ENCODE measurements at regions of chr12 and their contacts with region 1.

Region 1: GRCh38 chr12:110100315-110100970 is 23.7 kb upstream of the IFT81 start:
- DNase-seq: peak; percentile 53 to 60
- H3K4me3 ChIP-seq: no peak overlapping the region
- H3K27ac ChIP-seq: no peak overlapping the region
- H3K4me1 ChIP-seq: no peaks in the 10 kb centered on the region
- H3K27me3 ChIP-seq: no peaks in the 10 kb centered on the region
- CTCF ChIP-seq: peak; percentile 97

Region 2: GRCh38 chr12:110888256-110888991 is 788.0 kb after region 1 on chr12:
- CTCF ChIA-PET with region 1: no interaction called
- POLR2A ChIA-PET with region 1: no interaction called
- intact Hi-C with region 1: loop called (anchors 5 kb)
- DNase-seq: no peak
- H3K4me3 ChIP-seq: peak overlapping the region; percentile 65
- H3K27ac ChIP-seq: no peak overlapping the region
- H3K4me1 ChIP-seq: no peaks in the 10 kb centered on the region
- H3K27me3 ChIP-seq: peaks cover 3% of the 10 kb centered on the region; the same call in 1 of the 2 replicates
- CTCF ChIP-seq: peak; percentile 66; the same call in 1 of the 2 replicates

Measured in PC-9 (cell line).